Common myeloid progenitor, CD34-positive (primary cell): ENCODE measurements at regions of chr14 and their contacts with region 1.

Region 1: DNA sequence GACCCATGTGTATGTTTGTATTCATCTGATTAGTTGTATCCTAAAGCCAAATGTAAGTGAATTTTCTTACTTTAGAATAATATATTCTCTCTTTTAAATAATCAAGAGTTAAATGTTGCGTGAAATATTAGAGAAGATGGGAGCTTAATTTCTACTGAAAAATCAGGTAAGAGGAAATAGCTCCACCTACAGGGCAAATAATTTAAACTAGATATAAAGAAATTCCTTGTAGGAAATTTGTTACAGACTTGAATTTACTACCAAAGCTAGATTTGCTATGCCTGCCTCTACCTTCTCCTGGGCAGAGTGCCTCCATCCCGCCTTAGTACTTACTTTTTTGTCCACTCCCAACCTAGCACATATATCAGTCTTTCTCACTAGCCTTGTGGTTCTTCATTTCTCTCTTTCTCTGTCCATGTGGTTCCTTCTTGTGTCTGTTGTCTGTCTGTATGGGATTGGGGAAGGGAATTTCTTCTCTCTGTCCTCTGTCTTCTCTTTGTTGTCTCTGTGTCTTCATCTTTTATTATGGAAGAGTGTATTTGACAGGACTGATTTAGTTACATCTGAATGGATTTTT is 44.7 kb downstream of the PALS1 start:
- DNase-seq: peak; percentile 53 to 72 (median 64)
- H3K4me3 ChIP-seq: no peak overlapping the region
- H3K27ac ChIP-seq: no peak overlapping the region
- H3K4me1 ChIP-seq: no peaks in the 10 kb centered on the region
- H3K27me3 ChIP-seq: no peaks in the 10 kb centered on the region

Region 2: DNA sequence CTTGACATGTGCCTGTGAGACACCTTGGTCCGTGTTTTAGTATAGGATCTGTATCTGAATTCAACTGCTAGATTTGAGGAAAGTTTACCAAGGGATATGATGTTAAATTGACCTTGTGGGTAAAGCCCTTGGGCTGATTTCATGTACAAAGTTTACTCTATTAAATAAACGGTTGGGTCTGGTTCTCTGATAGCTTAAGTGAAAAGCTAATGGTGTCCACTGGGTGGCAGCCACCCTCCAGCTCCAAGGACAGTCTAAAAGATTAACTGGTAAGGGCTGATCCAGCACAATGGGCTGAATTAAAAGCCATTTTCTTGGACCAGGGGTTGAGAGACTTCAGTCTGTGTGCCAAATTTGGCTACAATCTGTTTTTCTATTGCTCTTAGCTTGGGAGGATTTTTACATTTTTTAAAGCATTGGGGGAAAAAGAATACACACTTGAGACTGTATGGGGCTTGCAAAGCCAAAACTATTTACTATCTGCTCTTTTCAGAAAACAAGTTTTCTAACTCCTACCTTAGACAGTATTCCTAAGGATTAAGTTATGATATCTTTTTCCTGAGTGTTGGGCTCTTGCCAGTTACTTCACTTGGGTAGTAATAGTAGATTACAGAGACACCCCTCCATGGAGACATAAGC is 661.5 kb before region 1 on chr14:
- CTCF ChIA-PET with region 1: interaction called, 11 read pairs
- POLR2A ChIA-PET with region 1: no interaction called
- DNase-seq: peak; percentile 61 to 78 (median 73)
- H3K4me3 ChIP-seq: no peak overlapping the region
- H3K27ac ChIP-seq: no peak overlapping the region
- H3K4me1 ChIP-seq: no peaks in the 10 kb centered on the region
- H3K27me3 ChIP-seq: no peaks in the 10 kb centered on the region

Region 3: DNA sequence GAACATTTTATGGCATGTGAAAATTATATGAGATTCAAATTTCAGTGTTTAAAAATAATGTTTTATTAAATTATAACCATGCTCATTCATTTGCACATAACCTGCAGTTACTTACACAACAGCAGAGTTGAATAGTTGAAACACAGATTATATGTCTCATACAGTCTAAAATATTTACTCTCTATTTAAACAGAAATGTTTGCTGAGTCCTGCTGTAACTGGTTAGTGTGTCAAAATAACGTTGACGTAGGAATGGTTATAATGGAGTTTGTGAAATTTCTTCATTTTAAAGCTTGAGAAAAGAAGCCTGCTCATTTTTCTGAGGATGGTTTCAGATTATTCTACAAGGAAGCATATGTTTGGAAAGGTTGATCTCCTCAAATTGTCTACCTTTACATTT is 293.2 kb before region 1 on chr14:
- CTCF ChIA-PET with region 1: no interaction called
- POLR2A ChIA-PET with region 1: no interaction called
- DNase-seq: no peak
- H3K4me3 ChIP-seq: no peak overlapping the region
- H3K27ac ChIP-seq: no peak overlapping the region
- H3K4me1 ChIP-seq: no peaks in the 10 kb centered on the region
- H3K27me3 ChIP-seq: no peaks in the 10 kb centered on the region

Region 4: GRCh38 chr14:67166450-67166853 is 119.5 kb before region 1 on chr14:
- CTCF ChIA-PET with region 1: interaction called, 97 read pairs
- POLR2A ChIA-PET with region 1: interaction called, 4 read pairs
- DNase-seq: peak; percentile 51 to 78 (median 70)
- H3K4me3 ChIP-seq: no peak overlapping the region
- H3K27ac ChIP-seq: no peak overlapping the region
- H3K4me1 ChIP-seq: no peaks in the 10 kb centered on the region
- H3K27me3 ChIP-seq: no peaks in the 10 kb centered on the region